ENCODE measurements at regions of chr13 and their contacts with region 1.

Region 1: DNA sequence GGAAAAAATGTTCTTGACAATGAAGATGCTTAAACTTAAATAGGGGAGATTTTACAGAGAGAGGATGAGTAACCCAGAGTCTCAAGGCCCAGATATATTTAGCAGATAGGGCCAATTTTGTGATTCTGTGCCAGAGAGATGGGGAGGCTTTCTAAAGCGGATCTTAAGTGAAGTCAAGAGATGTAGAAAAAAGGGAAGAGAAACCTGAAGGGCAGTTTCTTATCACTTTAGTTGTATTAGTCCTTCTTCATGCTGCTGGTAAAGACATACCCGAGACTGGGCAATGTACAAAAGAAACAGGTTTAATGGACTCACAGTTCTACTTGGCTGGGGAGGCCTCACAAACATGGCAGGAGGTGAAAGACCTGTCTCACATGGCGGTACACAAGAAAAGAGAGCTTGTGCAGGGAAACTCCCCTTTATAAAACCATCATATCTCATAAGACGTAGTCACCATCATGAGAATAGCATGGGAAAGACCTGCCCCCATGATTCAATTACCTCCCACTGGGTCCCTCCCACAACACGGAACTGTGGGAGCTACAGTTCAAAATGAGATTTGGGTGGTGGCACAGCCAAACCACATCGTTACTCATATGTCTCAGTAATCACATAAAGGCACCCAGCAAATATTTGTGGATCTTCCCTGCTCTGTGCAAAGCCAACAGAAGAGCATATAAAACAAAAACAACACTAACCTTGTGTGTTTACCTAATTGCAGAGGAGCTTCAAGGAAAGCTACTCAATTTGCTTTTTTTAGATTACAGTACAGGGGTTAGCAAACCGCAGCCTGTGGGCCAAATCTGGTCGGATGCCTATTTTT is 102.6 kb upstream of the MYCBP2 start:
- DNase-seq: peak; percentile 93
- ATAC-seq: peak; percentile 63
- H3K4me3 ChIP-seq: peak overlapping the region; percentile 47
- H3K27ac ChIP-seq: peak overlapping the region; percentile 85
- H3K4me1 ChIP-seq: peaks cover 26% of the 10 kb centered on the region
- H3K27me3 ChIP-seq: no peaks in the 10 kb centered on the region
- CTCF ChIP-seq: no peak
- EP300 ChIP-seq: peak; percentile 64 to 73; a peak in 3 of 4 replicates
- POLR2A ChIP-seq: no peak
- RAD21 ChIP-seq: peak; percentile 21; the same call in 1 of the 2 replicates

Region 2: GRCh38 chr13:77318741-77319140 is 110.8 kb before region 1 on chr13:
- CTCF ChIA-PET with region 1: interaction called, 12 read pairs
- POLR2A ChIA-PET with region 1: interaction called, 6 read pairs
- RAD21 ChIA-PET with region 1: interaction called, 10 read pairs
- SMC1A ChIA-PET with region 1: interaction called, 50 read pairs
- in situ Hi-C with region 1: no loop called
- intact Hi-C with region 1: no loop called
- DNase-seq: no peak
- ATAC-seq: no peak; the same call in 2 of the 3 replicates
- H3K4me3 ChIP-seq: no peak overlapping the region
- H3K27ac ChIP-seq: no peak overlapping the region
- H3K4me1 ChIP-seq: 0 out of 2 replicates have a peak, but pooled peaks cover 3% of the 10 kb centered on the region
- H3K27me3 ChIP-seq: no peaks in the 10 kb centered on the region
- CTCF ChIP-seq: no peak
- EP300 ChIP-seq: no peak
- POLR2A ChIP-seq: no peak
- RAD21 ChIP-seq: no peak

Region 3: DNA sequence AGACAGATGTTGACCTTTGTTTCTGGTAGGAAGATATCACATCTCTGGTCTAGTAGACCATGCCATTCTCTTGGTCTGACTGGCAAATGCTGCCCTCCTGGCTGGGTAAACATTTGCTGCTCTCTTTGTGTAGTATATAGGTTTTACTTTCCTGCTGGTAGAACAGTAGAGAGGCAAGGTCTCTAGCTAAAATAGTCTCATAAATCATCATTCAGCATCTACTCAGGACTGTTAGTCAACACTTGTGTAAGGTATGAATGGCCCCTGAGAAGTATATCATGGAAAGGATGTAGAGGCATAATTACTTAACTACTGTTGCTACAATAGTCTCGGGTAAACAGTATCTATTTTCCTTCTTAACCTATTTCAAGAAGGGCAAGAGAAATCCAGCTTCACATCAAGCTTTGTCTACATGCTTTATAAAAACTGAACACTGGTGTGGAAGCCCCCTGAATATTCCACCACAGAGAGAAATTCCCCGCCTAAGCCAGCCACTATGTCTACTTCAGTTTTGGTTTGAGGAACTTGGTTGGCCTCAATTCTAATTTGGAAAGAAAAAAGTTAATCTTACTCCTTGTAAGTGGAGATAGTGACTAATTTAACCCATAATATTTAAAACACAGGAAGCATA is 84.3 kb before region 1 on chr13:
- CTCF ChIA-PET with region 1: interaction called, 5 read pairs
- POLR2A ChIA-PET with region 1: interaction called, 36 read pairs
- RAD21 ChIA-PET with region 1: interaction called, 33 read pairs
- SMC1A ChIA-PET with region 1: interaction called, 41 read pairs
- in situ Hi-C with region 1: no loop called
- intact Hi-C with region 1: loop called (anchors 1 kb)
- DNase-seq: no peak
- ATAC-seq: peak; percentile 81
- H3K4me3 ChIP-seq: no peak overlapping the region
- H3K27ac ChIP-seq: peak overlapping the region; percentile 49
- H3K4me1 ChIP-seq: peaks cover 13% of the 10 kb centered on the region
- H3K27me3 ChIP-seq: no peaks in the 10 kb centered on the region
- CTCF ChIP-seq: no peak
- EP300 ChIP-seq: peak; percentile 37 to 72; a peak in 1 of 4 replicates
- POLR2A ChIP-seq: no peak
- RAD21 ChIP-seq: peak; percentile 13; the same call in 1 of the 2 replicates

Region 4: DNA sequence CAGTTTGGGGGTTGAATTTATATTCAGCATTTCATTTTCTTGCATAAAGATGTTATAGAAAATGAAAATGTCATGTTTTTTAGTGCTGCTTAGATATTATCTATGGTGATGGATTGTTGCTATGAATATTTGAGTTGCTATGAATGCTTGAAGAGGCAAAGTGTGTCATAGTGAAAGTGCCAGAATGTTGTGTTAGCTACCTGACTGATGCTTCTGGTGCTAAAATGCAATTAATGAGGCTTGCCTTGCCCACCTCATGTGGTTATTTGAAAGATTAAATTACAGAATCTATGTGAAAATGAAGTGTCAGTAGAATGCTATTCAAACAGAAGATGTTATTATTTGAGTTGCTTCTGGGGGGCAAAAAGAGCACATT is 39.9 kb before region 1 on chr13:
- CTCF ChIA-PET with region 1: interaction called, 5 read pairs
- POLR2A ChIA-PET with region 1: interaction called, 8 read pairs
- RAD21 ChIA-PET with region 1: interaction called, 12 read pairs
- SMC1A ChIA-PET with region 1: interaction called, 8 read pairs
- in situ Hi-C with region 1: no loop called
- intact Hi-C with region 1: loop called (anchors 2 kb)
- DNase-seq: peak; percentile 23
- ATAC-seq: peak; percentile 89
- H3K4me3 ChIP-seq: no peak overlapping the region
- H3K27ac ChIP-seq: no peak overlapping the region
- H3K4me1 ChIP-seq: peaks cover 9% of the 10 kb centered on the region; the same call in 1 of the 2 replicates
- H3K27me3 ChIP-seq: no peaks in the 10 kb centered on the region
- CTCF ChIP-seq: no peak
- EP300 ChIP-seq: peak; percentile 55 to 87; a peak in 3 of 4 replicates
- POLR2A ChIP-seq: no peak
- RAD21 ChIP-seq: no peak

Region 5: GRCh38 chr13:78372581-78372980 is 943.0 kb after region 1 on chr13:
- CTCF ChIA-PET with region 1: no interaction called
- POLR2A ChIA-PET with region 1: no interaction called
- RAD21 ChIA-PET with region 1: no interaction called
- SMC1A ChIA-PET with region 1: no interaction called
- in situ Hi-C with region 1: no loop called
- intact Hi-C with region 1: no loop called
- DNase-seq: no peak
- ATAC-seq: no peak
- H3K4me3 ChIP-seq: no peak overlapping the region
- H3K27ac ChIP-seq: no peak overlapping the region
- H3K4me1 ChIP-seq: no peaks in the 10 kb centered on the region
- H3K27me3 ChIP-seq: no peaks in the 10 kb centered on the region
- CTCF ChIP-seq: no peak
- EP300 ChIP-seq: no peak
- POLR2A ChIP-seq: no peak
- RAD21 ChIP-seq: no peak

Measured in GM12878 (cell line).